Activated T-helper 1 cell treated with anti-CD3 and anti-CD28 coated beads, Interleukin-12 subunit alpha, Interleukin-12 subunit beta, Interleukin-2, Interleukin-4 antibody, amounts not matched to agents 30 ng/mL and 10 ng/mL and 1 ng/mL, durations not matched to agents 14 hours and 24 hours and 36 hours (primary cell): ENCODE measurements at regions of chr9 and their contacts with region 1.

Region 1: GRCh38 chr9:69549310-69550202 is 122.6 kb downstream of the APBA1 start:
- DNase-seq: peak; percentile 3
- H3K4me3 Mint-ChIP-seq: no peak overlapping the region
- H3K27ac Mint-ChIP-seq: no peak overlapping the region
- H3K4me1 Mint-ChIP-seq: peaks cover 7% of the 10 kb centered on the region
- H3K27me3 Mint-ChIP-seq: peaks cover 33% of the 10 kb centered on the region

Region 2: GRCh38 chr9:68905129-68905528 is 644.4 kb before region 1 on chr9:
- intact Hi-C with region 1: no loop called
- DNase-seq: no peak
- H3K4me3 Mint-ChIP-seq: no peak overlapping the region
- H3K27ac Mint-ChIP-seq: no peak overlapping the region
- H3K4me1 Mint-ChIP-seq: peaks cover 17% of the 10 kb centered on the region
- H3K27me3 Mint-ChIP-seq: no peaks in the 10 kb centered on the region

Region 3: GRCh38 chr9:69035438-69036308 is 513.9 kb before region 1 on chr9 and contains the start of gene FXN:
- intact Hi-C with region 1: loop called (anchors 5 kb)
- DNase-seq: peak; percentile 78
- H3K4me3 Mint-ChIP-seq: peak within 1 kb of the TSS; percentile 88
- H3K27ac Mint-ChIP-seq: peak within 1 kb of the TSS; percentile 78
- H3K4me1 Mint-ChIP-seq: peaks cover 15% of the 10 kb centered on the region
- H3K27me3 Mint-ChIP-seq: no peaks in the 10 kb centered on the region
- total RNA-seq, gene FXN: 43.6 and 47.7 TPM in 2 replicates

Region 4: GRCh38 chr9:69471433-69471832 is 78.1 kb before region 1 on chr9:
- intact Hi-C with region 1: loop called (anchors 5 kb)
- DNase-seq: no peak
- H3K4me3 Mint-ChIP-seq: no peak overlapping the region
- H3K27ac Mint-ChIP-seq: no peak overlapping the region
- H3K4me1 Mint-ChIP-seq: peaks cover 36% of the 10 kb centered on the region
- H3K27me3 Mint-ChIP-seq: no peaks in the 10 kb centered on the region

Region 5: DNA sequence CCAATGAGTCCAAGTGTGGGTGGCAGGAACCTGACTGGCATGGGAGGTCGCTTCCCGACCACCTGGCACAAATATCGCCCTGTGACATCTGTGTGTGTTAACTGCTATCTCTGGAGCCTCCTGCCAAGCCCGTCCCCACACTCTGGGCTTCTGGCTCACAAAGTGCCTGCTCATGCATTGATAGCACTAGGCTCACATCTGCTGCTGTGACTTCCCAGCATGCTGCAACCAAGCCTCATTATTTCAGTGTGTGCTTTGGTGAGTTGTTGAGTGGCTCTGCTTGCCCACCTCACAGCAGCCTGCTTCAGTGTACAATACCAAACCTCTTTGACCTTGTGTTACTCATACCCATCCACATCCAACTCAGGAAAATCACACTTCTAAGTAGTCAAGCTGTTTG is 17.2 kb before region 1 on chr9:
- intact Hi-C with region 1: no loop called
- DNase-seq: no peak
- H3K4me3 Mint-ChIP-seq: no peak overlapping the region
- H3K27ac Mint-ChIP-seq: no peak overlapping the region
- H3K4me1 Mint-ChIP-seq: no peaks in the 10 kb centered on the region
- H3K27me3 Mint-ChIP-seq: peaks cover 6% of the 10 kb centered on the region

Region 6: DNA sequence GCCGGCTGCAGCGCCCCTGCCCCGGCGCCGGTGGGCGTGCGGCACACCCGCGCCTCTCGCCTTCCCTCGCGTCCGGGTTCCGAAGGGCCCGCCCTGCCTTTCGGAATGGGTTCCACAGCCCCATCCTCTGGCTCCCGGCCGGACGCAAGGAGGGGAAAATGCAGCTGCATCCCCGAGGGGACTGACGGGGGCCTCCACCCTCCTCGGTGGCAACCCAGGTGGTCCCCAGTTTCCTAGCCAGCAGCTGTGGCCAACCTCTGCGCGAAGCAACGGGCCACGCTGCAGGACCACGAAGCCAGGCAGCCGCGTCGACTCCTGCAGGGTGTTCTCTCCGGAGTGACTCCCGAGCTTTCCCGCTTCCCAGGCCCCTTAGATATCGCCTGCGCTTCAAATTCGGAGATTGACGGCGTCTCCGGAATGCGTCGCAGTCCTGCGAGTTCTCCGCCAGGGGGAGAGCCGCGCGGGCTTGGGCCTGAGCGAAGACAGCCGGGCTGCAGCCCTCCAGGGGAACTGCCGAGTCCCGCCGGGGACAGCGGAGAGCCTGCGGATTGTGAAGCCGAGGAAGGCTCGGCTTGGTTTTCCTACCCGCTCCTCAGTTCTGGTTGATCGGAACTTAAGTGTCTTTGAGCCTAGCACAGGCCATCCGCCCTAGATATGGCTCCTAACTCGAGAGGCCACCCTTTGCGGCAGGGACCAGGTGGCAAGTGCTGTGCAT is 123.2 kb after region 1 on chr9:
- intact Hi-C with region 1: loop called (anchors 2 kb)
- DNase-seq: peak; percentile 65
- H3K4me3 Mint-ChIP-seq: peak overlapping the region; percentile 83
- H3K27ac Mint-ChIP-seq: peak overlapping the region; percentile 15
- H3K4me1 Mint-ChIP-seq: peaks cover 7% of the 10 kb centered on the region
- H3K27me3 Mint-ChIP-seq: peaks cover 42% of the 10 kb centered on the region

Region 7: DNA sequence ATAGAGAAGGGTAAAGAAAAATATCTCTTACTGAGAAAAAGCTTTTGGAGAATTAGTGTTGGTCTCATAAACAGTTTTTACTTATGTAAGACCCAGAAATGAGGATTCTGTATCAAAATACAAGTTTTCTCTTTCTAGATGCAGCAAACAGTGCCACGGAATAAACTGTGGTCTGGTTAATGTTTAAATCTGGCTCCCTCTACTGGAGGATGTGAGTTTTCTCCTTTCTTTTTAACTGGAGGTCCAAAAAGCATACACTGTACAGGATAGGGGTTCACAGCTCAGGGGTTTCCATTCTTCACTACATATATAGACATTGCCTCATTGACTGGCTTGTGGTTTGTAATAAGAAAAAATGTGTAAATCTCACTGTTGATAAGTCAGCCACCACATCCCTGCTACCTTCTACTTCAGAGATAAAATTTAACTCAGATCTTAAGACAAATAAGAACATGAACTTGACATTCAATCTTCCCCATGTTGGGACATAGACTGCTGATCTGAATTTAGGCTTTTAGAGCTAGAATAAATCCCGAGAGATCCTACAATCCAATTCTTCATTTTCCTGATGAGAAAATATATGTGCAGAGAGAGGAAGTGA is 370.0 kb after region 1 on chr9:
- intact Hi-C with region 1: loop called (anchors 10 kb)
- DNase-seq: no peak
- H3K4me3 Mint-ChIP-seq: no peak overlapping the region
- H3K27ac Mint-ChIP-seq: no peak overlapping the region
- H3K4me1 Mint-ChIP-seq: no peaks in the 10 kb centered on the region
- H3K27me3 Mint-ChIP-seq: peaks cover 6% of the 10 kb centered on the region